ENCODE measurements at regions of chr18 and their contacts with region 1.

Region 1: DNA sequence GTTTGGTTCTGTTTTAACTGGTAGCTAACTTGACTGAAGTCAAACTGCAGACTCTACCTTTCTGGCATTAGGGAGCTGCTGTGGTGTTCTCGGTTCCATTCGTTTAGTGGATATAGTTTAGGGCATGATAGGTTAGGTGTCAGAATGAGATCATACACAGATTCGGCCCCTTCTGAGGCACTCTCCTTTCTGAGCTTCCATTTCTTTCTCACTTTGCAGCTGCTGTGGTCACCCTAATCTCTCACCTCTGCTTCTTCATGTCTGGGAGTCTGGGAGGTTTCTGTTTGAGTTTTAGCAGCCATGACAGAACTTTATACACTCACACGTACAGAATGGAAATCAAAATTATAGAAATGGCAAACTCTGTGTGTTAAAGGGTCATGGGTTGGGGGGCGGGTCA is 122.8 kb downstream of the ATP9B start:
- DNase-seq: no peak
- H3K4me3 ChIP-seq: no peak overlapping the region
- H3K27ac ChIP-seq: no peak overlapping the region
- H3K4me1 ChIP-seq: peaks cover 1% of the 10 kb centered on the region
- H3K27me3 ChIP-seq: no peaks in the 10 kb centered on the region
- CTCF ChIP-seq: no peak
- EP300 ChIP-seq: no peak
- POLR2A ChIP-seq: no peak

Region 2: DNA sequence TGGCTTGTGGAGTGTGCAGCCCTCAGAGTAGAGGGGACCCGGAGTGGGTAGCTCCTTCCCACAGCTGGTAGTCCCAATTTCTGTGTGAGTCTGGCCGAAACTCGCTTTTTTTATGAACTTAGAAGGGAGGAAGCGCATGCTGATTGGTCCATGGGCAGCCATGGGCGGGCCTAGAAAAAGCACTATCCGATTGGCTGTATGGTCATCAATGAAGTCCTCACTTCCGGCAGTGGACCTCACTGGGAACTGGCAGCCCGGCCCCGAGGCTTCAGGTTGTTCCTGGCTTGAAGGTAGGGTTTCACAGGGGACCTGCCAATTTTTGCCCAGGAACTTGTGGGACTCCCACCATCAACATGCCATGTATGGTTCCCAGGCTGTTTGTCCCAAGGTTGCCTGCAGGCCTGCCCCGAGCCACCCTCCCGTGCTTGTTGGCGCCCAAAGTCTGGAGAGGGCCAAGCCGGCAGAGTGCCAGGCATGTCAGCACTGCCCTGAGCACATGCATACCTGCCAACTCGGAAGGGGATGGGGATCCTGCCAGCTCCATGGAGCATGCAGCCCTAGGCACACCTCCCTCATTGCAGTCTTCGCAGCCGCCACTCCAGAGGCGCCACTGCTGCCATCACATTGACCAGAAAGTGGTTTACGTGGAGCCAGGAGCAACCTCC is 24.3 kb before region 1 on chr18:
- intact Hi-C with region 1: loop called in 1 of 4 experiments (anchors 1 kb)
- DNase-seq: no peak
- H3K4me3 ChIP-seq: no peak overlapping the region
- H3K27ac ChIP-seq: no peak overlapping the region
- H3K4me1 ChIP-seq: peaks cover 3% of the 10 kb centered on the region
- H3K27me3 ChIP-seq: no peaks in the 10 kb centered on the region
- CTCF ChIP-seq: no peak
- EP300 ChIP-seq: no peak
- POLR2A ChIP-seq: no peak

Region 3: GRCh38 chr18:79393635-79394533 is 201.9 kb after region 1 on chr18:
- intact Hi-C with region 1: no loop called
- DNase-seq: peak; percentile 88 to 96 (median 96)
- H3K4me3 ChIP-seq: peak overlapping the region; percentile 56
- H3K27ac ChIP-seq: peak overlapping the region; percentile 77 to 92
- H3K4me1 ChIP-seq: peaks cover 5% of the 10 kb centered on the region
- H3K27me3 ChIP-seq: no peaks in the 10 kb centered on the region
- CTCF ChIP-seq: no peak
- EP300 ChIP-seq: no peak
- POLR2A ChIP-seq: peak; percentile 49